ENCODE measurements at regions of chr14 and their contacts with region 1.

Region 1: GRCh38 chr14:73463411-73463810 is 5.1 kb upstream of the NUMB start:
- DNase-seq: no peak
- H3K4me3 ChIP-seq: peak overlapping the region in 2 of 3 donors; percentile 47 to 57
- H3K27ac ChIP-seq: peak overlapping the region; percentile 15 to 79
- H3K4me1 ChIP-seq: peaks cover 5 to 33% (median 18%) of the 10 kb centered on the region in 3 donors
- H3K27me3 ChIP-seq: no peaks in the 10 kb centered on the region
- CTCF ChIP-seq: no peak

Region 2: GRCh38 chr14:73162251-73162650 is 301.2 kb before region 1 on chr14:
- intact Hi-C with region 1: no loop called
- DNase-seq: no peak
- H3K4me3 ChIP-seq: no peak overlapping the region
- H3K27ac ChIP-seq: no peak overlapping the region
- H3K4me1 ChIP-seq: no peaks in the 10 kb centered on the region
- H3K27me3 ChIP-seq: no peaks in the 10 kb centered on the region
- CTCF ChIP-seq: no peak

Region 3: DNA sequence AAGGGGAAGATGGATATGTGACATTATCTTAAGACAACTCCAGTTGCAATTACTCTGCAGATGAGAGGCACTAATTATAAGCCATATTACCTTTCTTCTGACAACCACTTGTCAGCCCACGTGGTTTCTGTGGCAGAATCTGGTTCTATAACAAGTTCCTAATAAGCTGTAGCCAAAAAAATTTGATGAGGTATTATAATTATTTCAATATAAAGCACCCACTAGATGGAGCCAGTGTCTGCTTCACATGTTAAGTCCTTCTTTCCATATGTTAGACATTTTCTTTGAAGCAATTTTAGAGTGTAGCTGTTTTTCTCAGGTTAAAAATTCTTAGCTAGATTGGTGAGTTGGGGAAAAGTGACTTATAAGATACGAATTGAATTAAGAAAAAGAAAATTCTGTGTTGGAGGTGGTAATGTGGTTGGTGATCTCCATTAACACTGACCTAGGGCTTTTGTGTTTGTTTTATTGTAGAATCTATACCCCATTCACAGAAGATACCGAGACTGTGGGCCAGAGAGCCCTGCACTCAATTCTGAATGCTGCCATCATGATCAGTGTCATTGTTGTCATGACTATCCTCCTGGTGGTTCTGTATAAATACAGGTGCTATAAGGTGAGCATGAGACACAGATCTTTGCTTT is 290.2 kb before region 1 on chr14:
- intact Hi-C with region 1: loop called (anchors 10 kb)
- DNase-seq: peak in 2 of 5 donors; percentile 48 to 64
- H3K4me3 ChIP-seq: no peak overlapping the region
- H3K27ac ChIP-seq: no peak overlapping the region
- H3K4me1 ChIP-seq: no peaks in the 10 kb centered on the region
- H3K27me3 ChIP-seq: no peaks in the 10 kb centered on the region
- CTCF ChIP-seq: peak; percentile 33

Region 4: GRCh38 chr14:73307261-73307660 is 156.2 kb before region 1 on chr14:
- intact Hi-C with region 1: loop called (anchors 10 kb)
- DNase-seq: no peak
- H3K4me3 ChIP-seq: no peak overlapping the region
- H3K27ac ChIP-seq: no peak overlapping the region
- H3K4me1 ChIP-seq: no peaks in the 10 kb centered on the region
- H3K27me3 ChIP-seq: no peaks in the 10 kb centered on the region
- CTCF ChIP-seq: no peak

Measured in kidney (tissue), 22 donors.